ENCODE measurements at regions of chr1 and their contacts with region 1.

Region 1: GRCh38 chr1:226121587-226122400 is 59.3 kb downstream of the H3-3A start:
- DNase-seq: peak; percentile 43
- H3K4me3 ChIP-seq: peak overlapping the region; percentile 22 to 58 (median 49)
- H3K27ac ChIP-seq: no peak overlapping the region
- H3K4me1 ChIP-seq: no peaks in the 10 kb centered on the region
- H3K27me3 ChIP-seq: peaks cover 0 to 2% of the 10 kb centered on the region in 2 experiments
- CTCF ChIP-seq: peak; percentile 68 to 82
- POLR2A ChIP-seq: no peak

Region 2: DNA sequence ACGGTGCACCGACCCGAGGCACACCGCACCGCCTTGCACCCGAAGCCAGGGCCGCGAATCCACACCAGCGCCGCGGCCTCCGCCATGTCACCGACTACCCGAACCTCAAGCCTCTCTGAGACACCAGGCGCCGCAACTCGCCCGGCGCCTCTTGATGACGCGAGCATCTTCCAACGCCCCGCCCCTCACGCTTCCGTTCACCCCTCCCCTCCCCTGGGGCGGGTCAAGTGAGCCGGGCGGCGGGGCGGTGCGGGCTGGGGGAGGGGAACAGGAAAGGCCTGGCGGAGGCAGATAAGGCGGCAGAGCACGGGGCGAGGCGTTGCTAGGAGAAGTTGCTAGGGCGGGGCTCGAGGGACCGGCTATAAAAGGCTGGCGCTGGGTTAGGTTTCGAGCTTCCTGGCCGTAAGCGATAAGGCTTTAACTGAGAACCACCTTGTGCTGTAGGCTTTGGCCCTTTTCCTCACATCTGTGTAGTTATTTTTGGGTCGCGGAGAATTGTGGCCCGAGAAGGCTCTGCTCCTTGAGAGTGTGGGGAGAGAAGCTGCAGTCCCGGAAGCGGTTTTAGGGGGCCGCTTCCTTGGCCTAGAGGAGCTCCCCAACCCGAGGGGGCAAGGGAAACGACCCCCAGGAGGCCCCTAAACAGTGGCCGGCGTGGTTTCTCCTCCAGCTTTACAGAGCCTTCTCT is 122.4 kb before region 1 on chr1 and contains the start of gene SDE2:
- CTCF ChIA-PET with region 1: no interaction called
- POLR2A ChIA-PET with region 1: no interaction called
- dilution Hi-C with region 1: no loop called
- intact Hi-C with region 1: loop called (anchors 2 kb)
- DNase-seq: peak; percentile 100
- H3K4me3 ChIP-seq: peak within 1 kb of the TSS; percentile 75 to 97 (median 90)
- H3K27ac ChIP-seq: peak within 1 kb of the TSS; percentile 96
- H3K4me1 ChIP-seq: peaks cover 52% of the 10 kb centered on the region
- H3K27me3 ChIP-seq: no peaks in the 10 kb centered on the region
- CTCF ChIP-seq: no peak
- POLR2A ChIP-seq: peak; percentile 98
- total RNA-seq, gene SDE2: 15.9 and 16.1 TPM in 2 replicates

Region 3: GRCh38 chr1:226027538-226028217 is 94.1 kb before region 1 on chr1:
- CTCF ChIA-PET with region 1: no interaction called
- POLR2A ChIA-PET with region 1: no interaction called
- dilution Hi-C with region 1: no loop called
- intact Hi-C with region 1: no loop called
- DNase-seq: no peak
- H3K4me3 ChIP-seq: no peak overlapping the region
- H3K27ac ChIP-seq: no peak overlapping the region
- H3K4me1 ChIP-seq: no peaks in the 10 kb centered on the region
- H3K27me3 ChIP-seq: peaks cover 0 to 1% of the 10 kb centered on the region in 2 experiments
- CTCF ChIP-seq: no peak
- POLR2A ChIP-seq: no peak

Region 4: GRCh38 chr1:226100436-226101391 is 21.1 kb before region 1 on chr1:
- CTCF ChIA-PET with region 1: interaction called, 16 read pairs
- POLR2A ChIA-PET with region 1: no interaction called
- dilution Hi-C with region 1: no loop called
- intact Hi-C with region 1: no loop called
- DNase-seq: peak; percentile 61
- H3K4me3 ChIP-seq: peak overlapping the region; percentile 36 to 81 (median 80)
- H3K27ac ChIP-seq: no peak overlapping the region
- H3K4me1 ChIP-seq: peaks cover 10% of the 10 kb centered on the region
- H3K27me3 ChIP-seq: peaks cover 2 to 8% of the 10 kb centered on the region in 2 experiments
- CTCF ChIP-seq: no peak
- POLR2A ChIP-seq: no peak

Region 5: GRCh38 chr1:226135059-226135651 is 13.4 kb after region 1 on chr1:
- CTCF ChIA-PET with region 1: interaction called, 18 read pairs
- POLR2A ChIA-PET with region 1: no interaction called
- dilution Hi-C with region 1: no loop called
- intact Hi-C with region 1: no loop called
- DNase-seq: peak; percentile 37
- H3K4me3 ChIP-seq: no peak overlapping the region
- H3K27ac ChIP-seq: no peak overlapping the region
- H3K4me1 ChIP-seq: no peaks in the 10 kb centered on the region
- H3K27me3 ChIP-seq: peaks cover 0 to 5% of the 10 kb centered on the region in 2 experiments
- CTCF ChIP-seq: no peak
- POLR2A ChIP-seq: no peak

Region 6: GRCh38 chr1:226166341-226166740 is 44.5 kb after region 1 on chr1:
- CTCF ChIA-PET with region 1: interaction called, 13 read pairs
- POLR2A ChIA-PET with region 1: no interaction called
- dilution Hi-C with region 1: no loop called
- intact Hi-C with region 1: no loop called
- DNase-seq: no peak
- H3K4me3 ChIP-seq: no peak overlapping the region
- H3K27ac ChIP-seq: no peak overlapping the region
- H3K4me1 ChIP-seq: no peaks in the 10 kb centered on the region
- H3K27me3 ChIP-seq: no peaks in the 10 kb centered on the region
- CTCF ChIP-seq: no peak
- POLR2A ChIP-seq: no peak

Region 7: DNA sequence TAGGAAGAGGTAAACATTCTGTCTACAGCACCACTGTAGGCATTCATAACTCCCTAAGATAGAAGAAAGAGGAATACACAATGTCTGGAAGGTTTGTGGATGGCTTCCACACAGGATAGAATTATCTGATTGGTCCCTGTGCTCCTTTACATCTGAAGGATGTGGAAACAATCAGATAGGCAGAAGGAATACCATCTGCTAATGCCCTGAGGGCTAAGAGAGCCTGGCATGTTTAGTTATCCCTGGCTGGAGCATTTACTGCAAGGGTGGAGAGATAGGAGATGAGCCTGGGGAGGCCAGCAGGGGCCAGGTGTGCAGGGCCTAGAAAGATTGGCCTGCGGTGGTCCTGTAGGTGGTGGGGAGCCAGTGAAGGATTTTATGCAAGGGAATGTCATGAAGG is 73.3 kb after region 1 on chr1:
- CTCF ChIA-PET with region 1: interaction called, 145 read pairs
- POLR2A ChIA-PET with region 1: no interaction called
- dilution Hi-C with region 1: no loop called
- intact Hi-C with region 1: loop called (anchors 1 kb)
- DNase-seq: no peak
- H3K4me3 ChIP-seq: no peak overlapping the region
- H3K27ac ChIP-seq: no peak overlapping the region
- H3K4me1 ChIP-seq: no peaks in the 10 kb centered on the region
- H3K27me3 ChIP-seq: no peaks in the 10 kb centered on the region
- CTCF ChIP-seq: no peak
- POLR2A ChIP-seq: no peak

Region 8: DNA sequence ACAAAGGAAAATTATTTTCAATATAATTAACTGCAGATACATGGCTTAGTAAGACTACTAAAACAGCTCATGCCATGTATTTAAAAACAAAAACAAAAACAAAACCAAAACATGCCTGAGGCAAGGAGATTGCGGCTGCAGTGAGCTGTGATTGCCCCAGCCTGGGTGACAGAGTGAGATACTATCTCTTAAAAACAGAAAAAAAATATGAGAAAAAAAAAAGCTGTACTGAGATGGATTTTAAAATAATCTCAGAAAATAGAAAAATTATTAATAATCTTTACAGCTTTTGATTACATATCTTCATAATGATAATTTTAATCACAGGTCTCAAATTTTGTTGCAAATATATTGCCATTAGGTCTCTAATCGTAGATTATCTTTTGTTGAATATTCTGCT is 211.2 kb after region 1 on chr1:
- CTCF ChIA-PET with region 1: interaction called, 52 read pairs
- POLR2A ChIA-PET with region 1: no interaction called
- dilution Hi-C with region 1: no loop called
- intact Hi-C with region 1: loop called (anchors 1 kb)
- DNase-seq: no peak
- H3K4me3 ChIP-seq: no peak overlapping the region
- H3K27ac ChIP-seq: no peak overlapping the region
- H3K4me1 ChIP-seq: no peaks in the 10 kb centered on the region
- H3K27me3 ChIP-seq: no peaks in the 10 kb centered on the region
- CTCF ChIP-seq: no peak
- POLR2A ChIP-seq: no peak

Region 9: DNA sequence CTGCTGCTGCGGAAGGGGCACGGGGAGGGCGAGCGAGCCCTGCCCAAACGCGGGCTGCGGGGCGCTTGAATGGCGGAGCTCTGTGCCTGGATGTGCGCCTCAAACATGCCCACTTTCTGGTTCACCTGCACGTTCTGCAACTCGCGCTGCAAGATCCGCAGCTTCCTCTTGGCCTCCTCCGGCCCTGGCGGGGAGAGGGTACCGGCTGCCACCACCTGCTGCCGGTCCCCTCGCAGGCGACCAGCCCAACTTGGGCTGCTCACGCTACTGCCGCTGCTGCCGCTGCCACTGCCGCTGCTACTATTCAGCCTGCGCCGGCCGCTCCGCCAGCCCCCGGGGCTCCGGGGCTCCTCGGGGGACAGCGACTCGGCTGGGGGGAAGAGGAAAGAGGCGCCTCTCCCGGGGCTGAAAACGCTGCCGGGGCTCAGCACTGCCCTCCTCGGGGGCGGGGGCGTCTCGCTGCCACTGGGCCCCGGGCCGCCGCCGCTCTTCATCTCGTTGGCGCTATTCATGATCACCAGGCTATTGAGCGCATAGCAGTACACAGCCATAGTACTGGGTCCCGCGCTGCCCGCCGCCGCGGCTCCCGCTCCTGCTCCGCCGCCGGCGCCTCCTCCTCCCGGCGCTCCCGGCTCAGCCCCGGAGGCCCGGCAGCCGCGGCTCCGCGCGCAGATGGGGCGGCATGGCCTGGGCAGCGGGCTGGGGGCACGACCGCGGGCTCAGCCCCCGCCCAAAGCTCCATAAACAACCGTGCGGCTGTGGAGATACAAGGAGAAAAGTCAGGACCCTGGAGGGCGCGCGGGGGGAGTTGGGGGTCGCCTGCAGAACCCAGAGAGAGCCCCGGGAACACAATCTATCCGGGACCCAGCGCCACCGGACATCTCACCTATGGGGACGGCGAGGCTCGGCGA is 615.4 kb after region 1 on chr1:
- CTCF ChIA-PET with region 1: no interaction called
- POLR2A ChIA-PET with region 1: no interaction called
- dilution Hi-C with region 1: no loop called
- intact Hi-C with region 1: no loop called
- DNase-seq: peak; percentile 50
- H3K4me3 ChIP-seq: peak overlapping the region; percentile 68 to 89 (median 70)
- H3K27ac ChIP-seq: peak overlapping the region; percentile 90
- H3K4me1 ChIP-seq: peaks cover 21% of the 10 kb centered on the region
- H3K27me3 ChIP-seq: no peaks in the 10 kb centered on the region
- CTCF ChIP-seq: peak in 1 of 2 donors; percentile 21
- POLR2A ChIP-seq: no peak

Measured in endothelial cell of umbilical vein (primary cell).